Activated CD4-positive, alpha-beta memory T cell treated with anti-CD3 and anti-CD28 coated beads, Interleukin-2, amount 10 ng/mL, durations not matched to agents 7 days and 5 days (primary cell): ENCODE measurements at regions of chr1 and their contacts with region 1.

Region 1: GRCh38 chr1:166479052-166479631 is 312.3 kb upstream of the FAM78B start:
- DNase-seq: peak; percentile 59
- H3K4me3 Mint-ChIP-seq: no peak overlapping the region
- H3K27ac Mint-ChIP-seq: no peak overlapping the region
- H3K4me1 Mint-ChIP-seq: no peaks in the 10 kb centered on the region
- H3K27me3 Mint-ChIP-seq: peaks cover 2% of the 10 kb centered on the region

Region 2: DNA sequence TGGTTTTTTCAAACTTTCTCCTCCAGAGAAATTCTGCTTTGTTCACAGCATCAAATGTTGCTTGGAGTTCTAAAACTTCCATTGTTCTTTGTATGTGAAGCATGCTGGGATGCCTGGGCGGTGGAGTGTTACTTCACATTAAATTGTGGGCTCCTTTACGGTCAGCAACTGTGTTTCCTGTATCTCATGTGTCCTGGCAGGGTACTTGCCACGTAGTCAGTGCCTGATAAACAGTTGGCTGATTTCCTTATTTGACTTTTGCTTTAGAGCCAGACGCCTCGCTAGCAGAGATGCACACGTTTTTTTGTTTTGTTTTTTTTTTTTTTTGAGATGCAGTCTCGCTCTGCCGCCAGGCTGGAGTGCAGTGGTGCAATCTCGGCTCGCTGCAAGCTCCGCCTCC is 555.0 kb before region 1 on chr1:
- CTCF ChIA-PET with region 1: interaction called, 18 read pairs
- POLR2A ChIA-PET with region 1: no interaction called
- DNase-seq: no peak
- H3K4me3 Mint-ChIP-seq: no peak overlapping the region
- H3K27ac Mint-ChIP-seq: no peak overlapping the region
- H3K4me1 Mint-ChIP-seq: peaks cover 11% of the 10 kb centered on the region
- H3K27me3 Mint-ChIP-seq: peaks cover 11% of the 10 kb centered on the region

Region 3: DNA sequence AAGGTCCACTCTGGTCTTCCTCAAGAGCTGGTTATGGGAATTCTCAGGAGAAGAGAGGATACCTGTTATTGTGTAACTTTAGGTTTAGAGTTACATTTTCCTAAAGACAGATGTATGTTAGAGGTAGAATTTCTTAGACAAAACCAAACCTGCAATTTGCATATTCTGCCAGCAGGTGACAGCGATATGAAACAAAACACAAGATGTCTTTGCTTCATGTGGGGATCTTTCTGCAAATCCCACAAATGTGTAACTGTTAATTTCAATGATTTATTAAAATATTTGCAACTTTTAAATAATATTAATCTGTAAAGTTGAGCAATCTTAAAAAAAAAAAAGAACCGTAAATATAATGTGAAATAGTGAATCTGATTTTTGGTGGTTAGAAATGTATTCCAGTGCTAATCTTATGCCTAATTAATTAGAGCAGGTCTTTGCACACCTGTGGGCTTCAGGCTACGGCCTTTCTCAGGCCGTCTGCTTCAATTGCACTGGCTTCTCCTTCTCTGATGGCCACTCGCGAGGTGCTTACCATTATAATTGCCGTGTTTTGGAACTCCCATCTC is 345.8 kb before region 1 on chr1:
- CTCF ChIA-PET with region 1: interaction called, 10 read pairs
- POLR2A ChIA-PET with region 1: no interaction called
- DNase-seq: no peak
- H3K4me3 Mint-ChIP-seq: no peak overlapping the region
- H3K27ac Mint-ChIP-seq: no peak overlapping the region
- H3K4me1 Mint-ChIP-seq: no peaks in the 10 kb centered on the region
- H3K27me3 Mint-ChIP-seq: no peaks in the 10 kb centered on the region

Region 4: GRCh38 chr1:166489670-166490436 is 10.7 kb after region 1 on chr1:
- CTCF ChIA-PET with region 1: interaction called, 31 read pairs
- POLR2A ChIA-PET with region 1: interaction called, 4 read pairs
- DNase-seq: peak; percentile 52
- H3K4me3 Mint-ChIP-seq: no peak overlapping the region
- H3K27ac Mint-ChIP-seq: no peak overlapping the region
- H3K4me1 Mint-ChIP-seq: peaks cover 7% of the 10 kb centered on the region
- H3K27me3 Mint-ChIP-seq: no peaks in the 10 kb centered on the region

Region 5: GRCh38 chr1:166603247-166603646 is 124.1 kb after region 1 on chr1:
- CTCF ChIA-PET with region 1: no interaction called
- POLR2A ChIA-PET with region 1: no interaction called
- DNase-seq: no peak
- H3K4me3 Mint-ChIP-seq: no peak overlapping the region
- H3K27ac Mint-ChIP-seq: no peak overlapping the region
- H3K4me1 Mint-ChIP-seq: no peaks in the 10 kb centered on the region
- H3K27me3 Mint-ChIP-seq: peaks cover 2% of the 10 kb centered on the region